Activated CD4-positive, alpha-beta T cell treated with anti-CD3 and anti-CD28 coated beads for 36 hours (primary cell): ENCODE measurements at regions of chr12 and their contacts with region 1.

Region 1: GRCh38 chr12:89949457-89950195 is 241.0 kb upstream of the ATP2B1 start:
- DNase-seq: peak; percentile 51
- ATAC-seq: peak; percentile 82
- H3K4me3 Mint-ChIP-seq: no peak overlapping the region
- H3K27ac Mint-ChIP-seq: peak overlapping the region; percentile 64
- H3K4me1 Mint-ChIP-seq: peaks cover 50% of the 10 kb centered on the region
- H3K27me3 Mint-ChIP-seq: no peaks in the 10 kb centered on the region

Region 2: GRCh38 chr12:89597770-89598169 is 351.9 kb before region 1 on chr12:
- CTCF ChIA-PET with region 1: no interaction called
- POLR2A ChIA-PET with region 1: no interaction called
- intact Hi-C with region 1: loop called in 1 of 2 experiments (anchors 5 kb)
- DNase-seq: no peak
- ATAC-seq: peak; percentile 44
- H3K4me3 Mint-ChIP-seq: peak overlapping the region; percentile 33
- H3K27ac Mint-ChIP-seq: no peak overlapping the region
- H3K4me1 Mint-ChIP-seq: peaks cover 24% of the 10 kb centered on the region
- H3K27me3 Mint-ChIP-seq: no peaks in the 10 kb centered on the region

Region 3: DNA sequence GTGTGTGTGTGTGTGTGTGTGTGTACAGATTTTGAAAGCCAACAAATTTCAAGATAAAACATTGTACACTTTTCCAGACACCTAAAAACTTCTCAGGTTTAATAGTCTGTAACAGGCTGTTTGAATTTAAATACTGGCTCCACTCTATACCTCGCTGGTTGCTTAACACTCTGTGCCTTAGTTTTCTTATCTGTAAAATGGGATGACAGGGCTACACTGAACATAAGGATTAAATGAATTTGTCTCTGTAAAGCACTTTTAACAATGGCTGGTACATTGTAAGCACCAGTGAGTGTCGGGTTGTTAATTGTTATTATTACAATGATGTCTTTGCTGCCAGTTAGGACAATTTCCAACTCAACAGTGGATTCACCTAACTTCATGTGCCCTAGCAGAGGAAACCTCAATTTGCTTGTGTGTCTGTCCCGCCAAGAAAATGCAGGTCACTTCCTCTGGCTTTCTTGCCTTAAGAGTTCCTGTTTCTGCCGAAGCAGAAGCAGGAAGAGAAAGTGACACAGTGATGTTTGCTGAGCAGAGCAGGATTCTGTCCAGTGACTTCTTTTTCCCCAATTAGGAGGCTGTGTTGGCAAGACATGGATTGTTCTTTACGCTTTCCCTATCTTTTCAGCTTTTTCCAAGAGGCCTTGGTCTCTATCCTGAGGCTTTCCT is 87.0 kb before region 1 on chr12:
- CTCF ChIA-PET with region 1: no interaction called
- POLR2A ChIA-PET with region 1: interaction called, 3 read pairs
- intact Hi-C with region 1: loop called (anchors 1 to 5 kb)
- DNase-seq: peak; percentile 45
- ATAC-seq: peak; percentile 40
- H3K4me3 Mint-ChIP-seq: peak overlapping the region; percentile 70
- H3K27ac Mint-ChIP-seq: peak overlapping the region; percentile 98
- H3K4me1 Mint-ChIP-seq: peaks cover 64% of the 10 kb centered on the region
- H3K27me3 Mint-ChIP-seq: no peaks in the 10 kb centered on the region

Region 4: DNA sequence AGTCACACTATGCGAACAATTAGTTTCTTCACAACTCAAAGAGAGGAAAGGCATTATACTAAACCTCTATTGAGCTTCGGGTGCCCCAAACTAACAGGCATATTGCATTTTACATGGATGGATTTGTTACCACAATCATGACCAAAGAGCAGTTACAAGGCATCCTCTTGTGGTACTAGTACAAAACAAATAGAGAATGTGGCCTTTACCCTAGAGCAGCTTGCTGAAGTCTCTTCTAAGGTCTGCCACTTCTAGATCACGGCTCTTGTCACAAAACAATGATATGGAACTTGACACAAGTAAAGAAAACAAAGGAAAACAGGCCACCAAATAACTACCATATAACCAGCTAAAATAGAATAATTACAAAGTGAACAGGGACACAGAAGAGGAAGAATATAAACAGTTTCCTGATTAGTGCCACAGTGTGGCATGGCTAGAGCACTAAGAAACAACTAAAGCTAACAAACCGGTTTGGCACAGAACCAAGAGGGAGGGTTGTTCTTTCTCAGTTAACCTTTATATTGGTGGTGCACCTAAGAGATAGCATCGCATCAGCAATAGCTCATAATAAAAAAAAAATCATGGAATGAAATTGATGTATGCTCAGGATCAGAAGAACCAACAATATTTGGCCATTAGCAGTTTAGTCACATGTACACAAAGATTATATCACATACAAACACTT is 31.3 kb before region 1 on chr12:
- CTCF ChIA-PET with region 1: no interaction called
- POLR2A ChIA-PET with region 1: no interaction called
- intact Hi-C with region 1: no loop called
- DNase-seq: no peak
- ATAC-seq: no peak
- H3K4me3 Mint-ChIP-seq: no peak overlapping the region
- H3K27ac Mint-ChIP-seq: no peak overlapping the region
- H3K4me1 Mint-ChIP-seq: peaks cover 4% of the 10 kb centered on the region
- H3K27me3 Mint-ChIP-seq: no peaks in the 10 kb centered on the region

Region 5: DNA sequence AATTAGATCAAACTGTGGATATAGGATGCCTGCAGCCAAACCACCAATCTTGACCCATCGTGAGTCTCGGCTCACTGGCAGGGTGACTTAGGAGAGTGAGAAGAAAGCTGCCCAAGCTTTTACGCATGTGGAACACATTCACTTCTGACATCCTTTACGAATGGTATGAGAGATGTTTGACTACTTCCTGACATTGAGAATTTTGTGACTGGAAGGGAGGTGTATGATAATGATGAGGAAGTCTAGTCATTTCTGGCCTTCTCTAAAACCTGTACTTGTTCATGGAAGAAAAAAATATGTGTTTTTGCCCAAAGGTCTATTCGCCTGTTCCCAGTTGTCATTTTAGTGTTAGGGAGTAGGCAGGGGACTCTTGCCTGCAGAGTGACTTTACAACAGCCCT is 13.8 kb before region 1 on chr12:
- CTCF ChIA-PET with region 1: interaction called, 10 read pairs
- POLR2A ChIA-PET with region 1: no interaction called
- intact Hi-C with region 1: no loop called
- DNase-seq: peak; percentile 10
- ATAC-seq: peak; percentile 89
- H3K4me3 Mint-ChIP-seq: no peak overlapping the region
- H3K27ac Mint-ChIP-seq: peak overlapping the region; percentile 47
- H3K4me1 Mint-ChIP-seq: peaks cover 27% of the 10 kb centered on the region
- H3K27me3 Mint-ChIP-seq: no peaks in the 10 kb centered on the region

Region 6: GRCh38 chr12:90042920-90043641 is 93.5 kb after region 1 on chr12:
- CTCF ChIA-PET with region 1: interaction called, 3 read pairs
- POLR2A ChIA-PET with region 1: no interaction called
- intact Hi-C with region 1: loop called in 1 of 2 experiments (anchors 5 kb)
- DNase-seq: no peak
- ATAC-seq: peak; percentile 77
- H3K4me3 Mint-ChIP-seq: no peak overlapping the region
- H3K27ac Mint-ChIP-seq: no peak overlapping the region
- H3K4me1 Mint-ChIP-seq: peaks cover 10% of the 10 kb centered on the region
- H3K27me3 Mint-ChIP-seq: no peaks in the 10 kb centered on the region